AG04449 (cell line): ENCODE measurements at regions of chr15 and their contacts with region 1.

Region 1: GRCh38 chr15:43769584-43770228 is 7.1 kb downstream of the ELL3 start:
- DNase-seq: no peak
- H3K4me3 ChIP-seq: no peak overlapping the region
- CTCF ChIP-seq: peak; percentile 76

Region 2: DNA sequence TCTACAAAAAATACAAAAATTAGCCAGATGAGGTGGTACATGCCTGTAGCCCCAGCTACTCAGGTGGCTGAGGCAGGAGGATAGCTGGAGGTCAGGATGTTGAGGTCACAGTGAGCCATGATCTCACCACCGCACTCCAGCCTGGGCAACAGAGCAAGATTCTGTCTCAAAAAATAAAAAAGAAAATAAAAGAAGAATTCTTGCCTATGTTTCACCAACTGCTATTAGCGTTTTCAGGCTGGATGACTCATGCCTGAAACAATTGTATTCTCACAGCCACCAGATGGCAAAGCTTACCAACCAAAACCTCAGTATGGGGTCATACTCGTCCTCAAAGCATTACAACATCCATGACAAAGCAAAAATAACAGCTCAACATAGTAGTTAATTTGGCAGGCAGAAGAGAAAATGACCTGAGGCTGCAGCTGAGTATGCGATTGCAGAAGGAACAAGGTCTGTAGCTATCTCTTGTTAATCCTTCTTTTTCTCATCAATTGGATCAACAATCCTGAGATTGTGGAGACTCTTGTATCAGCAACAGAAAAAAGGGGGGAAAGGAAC is 328.9 kb before region 1 on chr15:
- CTCF ChIA-PET with region 1: interaction called, 12 read pairs
- POLR2A ChIA-PET with region 1: no interaction called
- DNase-seq: peak; percentile 90
- H3K4me3 ChIP-seq: no peak overlapping the region
- CTCF ChIP-seq: peak; percentile 43

Region 3: DNA sequence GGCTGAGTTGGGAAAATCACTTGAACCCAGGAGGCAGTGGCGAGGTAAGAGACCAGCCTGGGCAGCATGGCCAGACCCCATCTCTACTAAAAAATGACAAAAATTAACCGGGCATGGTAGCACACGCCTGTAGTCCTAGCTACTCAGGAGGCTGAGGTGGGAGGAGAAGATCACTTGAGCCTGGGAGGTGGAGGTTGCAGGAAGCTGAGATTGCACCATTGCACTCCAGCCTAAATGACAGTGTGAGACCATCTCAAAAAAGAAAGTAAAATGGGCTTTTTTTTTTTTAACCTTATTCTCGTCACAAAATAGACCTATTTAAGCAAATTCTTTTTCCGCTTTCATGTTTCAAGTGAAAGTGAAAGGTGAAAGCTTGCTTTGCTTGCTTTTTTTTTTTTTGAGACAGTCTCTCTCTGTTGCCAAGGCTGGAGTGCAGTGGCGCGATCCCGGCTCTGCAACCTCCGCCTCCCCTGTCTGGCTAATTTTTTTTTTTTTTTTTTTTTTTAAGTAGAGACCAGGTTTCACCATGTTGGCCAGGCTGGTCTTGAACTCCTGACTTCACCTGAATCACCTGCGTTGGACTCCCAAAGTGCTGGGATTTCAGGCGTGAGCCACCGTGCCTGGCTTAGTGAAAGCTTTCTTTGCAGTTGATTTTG is 19.9 kb before region 1 on chr15:
- CTCF ChIA-PET with region 1: interaction called, 73 read pairs
- POLR2A ChIA-PET with region 1: interaction called, 3 read pairs
- DNase-seq: no peak
- H3K4me3 ChIP-seq: no peak overlapping the region
- CTCF ChIP-seq: no peak

Region 4: DNA sequence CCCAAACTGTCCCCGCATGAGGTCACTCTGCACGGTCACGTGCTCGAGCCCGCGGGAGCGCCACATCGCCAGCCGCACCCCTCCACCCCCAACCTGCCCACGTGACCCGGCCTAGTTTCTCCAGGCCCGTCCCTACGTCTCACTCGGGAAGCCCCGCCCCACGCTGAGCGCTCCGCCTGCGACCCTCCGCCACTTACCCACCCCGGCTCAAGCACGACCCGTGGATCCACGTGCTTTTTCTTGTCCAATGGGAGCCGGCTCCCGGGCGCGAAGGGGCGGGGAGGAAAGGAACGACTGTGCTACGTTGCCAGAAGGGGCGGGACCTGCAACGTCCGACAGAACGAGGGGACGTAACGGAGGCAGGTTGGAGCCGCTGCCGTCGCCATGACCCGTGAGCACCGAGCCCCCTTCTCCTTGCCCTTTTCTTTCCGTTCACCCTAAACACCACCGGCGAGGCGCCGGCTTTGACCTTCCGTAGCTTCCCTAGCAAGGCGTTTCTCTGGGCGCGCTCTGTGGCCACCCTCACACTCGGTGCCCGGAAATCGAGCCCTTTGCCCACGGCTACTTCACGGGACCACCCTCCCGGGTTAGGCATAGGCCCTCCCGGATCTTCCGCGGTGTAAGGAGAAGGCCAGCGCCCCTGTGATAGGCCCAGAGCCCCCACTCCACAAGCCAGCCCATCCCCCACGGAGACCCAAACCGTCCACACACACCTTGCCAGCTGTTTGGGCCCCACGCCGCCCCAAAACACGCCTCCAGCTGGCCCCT is 22.5 kb after region 1 on chr15 and contains the start of gene SERF2:
- CTCF ChIA-PET with region 1: interaction called, 34 read pairs
- POLR2A ChIA-PET with region 1: no interaction called
- DNase-seq: peak; percentile 96
- H3K4me3 ChIP-seq: peak within 1 kb of the TSS; percentile 100
- CTCF ChIP-seq: no peak

Region 5: GRCh38 chr15:43824302-43825246 is 54.9 kb after region 1 on chr15 and contains the start of gene MFAP1:
- CTCF ChIA-PET with region 1: no interaction called
- POLR2A ChIA-PET with region 1: no interaction called
- DNase-seq: peak; percentile 82
- H3K4me3 ChIP-seq: peak within 1 kb of the TSS; percentile 87
- CTCF ChIP-seq: no peak

Region 6: GRCh38 chr15:43881944-43882343 is 112.2 kb after region 1 on chr15:
- CTCF ChIA-PET with region 1: no interaction called
- POLR2A ChIA-PET with region 1: no interaction called
- DNase-seq: no peak
- H3K4me3 ChIP-seq: no peak overlapping the region
- CTCF ChIP-seq: peak; percentile 24